Lower leg skin (tissue), 4 donors: ENCODE measurements at regions of chr14 and their contacts with region 1.

Region 1: DNA sequence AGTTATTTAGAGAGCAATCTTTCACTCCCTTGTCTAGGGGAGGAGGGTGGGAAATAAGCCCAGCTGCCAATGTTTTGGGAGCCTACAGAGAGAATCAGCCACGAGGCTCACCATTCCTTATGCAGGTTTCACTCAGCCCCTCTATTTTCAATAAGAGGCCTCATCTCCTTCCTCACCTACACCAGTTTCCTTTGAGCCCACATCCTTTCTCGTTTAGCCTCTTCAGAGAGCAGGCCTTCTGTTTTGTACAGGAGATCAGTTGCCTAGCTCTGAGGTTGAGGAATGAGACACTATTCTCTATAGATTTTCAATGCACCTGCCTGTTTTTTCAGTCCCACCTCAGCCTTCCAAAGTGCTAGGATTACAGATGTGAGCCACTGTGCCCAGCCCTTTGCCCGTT is 17.9 kb downstream of the SNAPC1 start:
- DNase-seq: no peak
- H3K4me3 ChIP-seq: no peak overlapping the region
- CTCF ChIP-seq: no peak
- POLR2A ChIP-seq: no peak

Region 2: GRCh38 chr14:61812761-61813606 is 32.9 kb after region 1 on chr14:
- intact Hi-C with region 1: loop called (anchors 2 kb)
- DNase-seq: no peak
- H3K4me3 ChIP-seq: peak overlapping the region; percentile 3
- CTCF ChIP-seq: no peak
- POLR2A ChIP-seq: no peak

Region 3: GRCh38 chr14:61925043-61925442 is 144.9 kb after region 1 on chr14:
- intact Hi-C with region 1: no loop called
- DNase-seq: no peak
- H3K4me3 ChIP-seq: no peak overlapping the region
- CTCF ChIP-seq: no peak
- POLR2A ChIP-seq: no peak